ENCODE measurements at regions of chr6 and their contacts with region 1.

Region 1: GRCh38 chr6:17589406-17590096 is 10.6 kb upstream of the FAM8A1 start:
- DNase-seq: no peak
- ATAC-seq: peak; percentile 64
- H3K4me3 ChIP-seq: no peak overlapping the region
- H3K27ac ChIP-seq: no peak overlapping the region
- H3K4me1 ChIP-seq: no peaks in the 10 kb centered on the region
- H3K27me3 ChIP-seq: no peaks in the 10 kb centered on the region
- CTCF ChIP-seq: peak; percentile 8 to 49 (median 20); a peak in 2 of 6 replicates
- EP300 ChIP-seq: no peak
- POLR2A ChIP-seq: no peak
- RAD21 ChIP-seq: peak in 1 of 2 experiments; percentile 76; a peak in 3 of 4 replicates

Region 2: GRCh38 chr6:17042422-17043147 is 547.0 kb before region 1 on chr6:
- CTCF ChIA-PET with region 1: no interaction called
- POLR2A ChIA-PET with region 1: no interaction called
- in situ Hi-C with region 1: no loop called
- intact Hi-C with region 1: no loop called
- DNase-seq: no peak
- ATAC-seq: no peak
- H3K4me3 ChIP-seq: no peak overlapping the region
- H3K27ac ChIP-seq: no peak overlapping the region
- H3K4me1 ChIP-seq: no peaks in the 10 kb centered on the region
- H3K27me3 ChIP-seq: no peaks in the 10 kb centered on the region
- CTCF ChIP-seq: no peak
- EP300 ChIP-seq: no peak
- POLR2A ChIP-seq: no peak
- RAD21 ChIP-seq: no peak

Region 3: DNA sequence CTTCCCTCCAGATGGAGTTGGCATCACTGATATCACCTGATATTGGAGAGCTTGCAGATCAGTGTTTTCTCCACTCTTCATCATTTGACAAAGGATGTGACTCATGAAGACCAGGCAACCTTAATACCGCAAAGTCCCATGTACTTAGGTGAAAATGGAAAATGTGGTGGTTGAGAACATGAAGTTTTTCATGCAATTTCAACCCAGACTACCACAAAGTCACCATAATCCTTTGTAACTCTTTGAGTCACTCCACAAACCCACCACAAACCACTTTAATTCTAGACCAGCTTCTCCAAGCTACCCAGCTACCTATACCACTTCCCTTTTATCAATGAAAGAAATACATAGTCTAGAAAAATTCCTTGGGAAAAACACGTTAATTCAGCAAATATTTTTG is 525.8 kb after region 1 on chr6:
- CTCF ChIA-PET with region 1: no interaction called
- POLR2A ChIA-PET with region 1: no interaction called
- in situ Hi-C with region 1: no loop called
- intact Hi-C with region 1: loop called (anchors 5 kb)
- DNase-seq: no peak
- ATAC-seq: no peak
- H3K4me3 ChIP-seq: no peak overlapping the region
- H3K27ac ChIP-seq: no peak overlapping the region
- H3K4me1 ChIP-seq: peaks cover 0 to 3% of the 10 kb centered on the region in 2 experiments; a peak in 1 of 5 replicates
- H3K27me3 ChIP-seq: no peaks in the 10 kb centered on the region; a peak in 1 of 5 replicates
- CTCF ChIP-seq: no peak
- EP300 ChIP-seq: no peak
- POLR2A ChIP-seq: no peak
- RAD21 ChIP-seq: no peak

Region 4: GRCh38 chr6:18491308-18492045 is 901.9 kb after region 1 on chr6:
- CTCF ChIA-PET with region 1: no interaction called
- POLR2A ChIA-PET with region 1: no interaction called
- in situ Hi-C with region 1: loop called (anchors 5 kb)
- intact Hi-C with region 1: no loop called
- DNase-seq: no peak
- ATAC-seq: peak; percentile 63; the same call in 2 of the 3 replicates
- H3K4me3 ChIP-seq: no peak overlapping the region
- H3K27ac ChIP-seq: no peak overlapping the region
- H3K4me1 ChIP-seq: no peaks in the 10 kb centered on the region
- H3K27me3 ChIP-seq: peaks cover 0 to 5% of the 10 kb centered on the region in 2 experiments; a peak in 1 of 5 replicates
- CTCF ChIP-seq: no peak
- EP300 ChIP-seq: no peak
- POLR2A ChIP-seq: no peak
- RAD21 ChIP-seq: no peak

Measured in K562 (cell line).